Psoas muscle (tissue), 8 donors: ENCODE measurements at regions of chrX and their contacts with region 1.

Region 1: DNA sequence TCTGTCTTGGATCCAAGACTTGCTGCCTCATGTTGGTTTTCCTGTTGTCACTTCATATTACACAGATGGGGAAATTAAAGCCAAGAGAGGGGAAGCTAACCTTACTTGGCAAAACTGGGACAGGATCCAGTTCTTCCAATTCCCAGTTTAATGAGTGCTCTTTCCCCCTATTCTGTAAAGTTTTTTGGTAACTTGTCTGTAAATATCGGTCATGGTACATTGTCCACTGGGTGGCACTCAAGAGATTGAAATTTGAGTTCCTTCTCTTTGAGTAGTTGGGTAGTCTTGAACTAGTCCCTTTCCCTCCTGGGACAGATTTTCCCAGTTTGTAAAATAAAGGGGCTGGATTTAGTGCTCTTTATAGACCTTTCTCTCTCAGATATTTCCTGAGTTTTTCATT is 12.4 kb upstream of the EOLA2 start:
- DNase-seq: no peak
- ATAC-seq: peak in 3 of 4 donors; percentile 58 to 77 (median 60)
- H3K4me3 ChIP-seq: no peak overlapping the region
- H3K27ac ChIP-seq: peak overlapping the region; percentile 50
- H3K4me1 ChIP-seq: peaks cover 6% of the 10 kb centered on the region
- H3K27me3 ChIP-seq: no peaks in the 10 kb centered on the region
- CTCF ChIP-seq: peak; percentile 41

Region 2: GRCh38 chrX:150084496-150085229 is 134.0 kb after region 1 on chrX:
- intact Hi-C with region 1: no loop called
- DNase-seq: no peak
- ATAC-seq: no peak
- H3K4me3 ChIP-seq: no peak overlapping the region
- H3K27ac ChIP-seq: no peak overlapping the region
- H3K4me1 ChIP-seq: no peaks in the 10 kb centered on the region
- H3K27me3 ChIP-seq: no peaks in the 10 kb centered on the region
- CTCF ChIP-seq: no peak

Region 3: DNA sequence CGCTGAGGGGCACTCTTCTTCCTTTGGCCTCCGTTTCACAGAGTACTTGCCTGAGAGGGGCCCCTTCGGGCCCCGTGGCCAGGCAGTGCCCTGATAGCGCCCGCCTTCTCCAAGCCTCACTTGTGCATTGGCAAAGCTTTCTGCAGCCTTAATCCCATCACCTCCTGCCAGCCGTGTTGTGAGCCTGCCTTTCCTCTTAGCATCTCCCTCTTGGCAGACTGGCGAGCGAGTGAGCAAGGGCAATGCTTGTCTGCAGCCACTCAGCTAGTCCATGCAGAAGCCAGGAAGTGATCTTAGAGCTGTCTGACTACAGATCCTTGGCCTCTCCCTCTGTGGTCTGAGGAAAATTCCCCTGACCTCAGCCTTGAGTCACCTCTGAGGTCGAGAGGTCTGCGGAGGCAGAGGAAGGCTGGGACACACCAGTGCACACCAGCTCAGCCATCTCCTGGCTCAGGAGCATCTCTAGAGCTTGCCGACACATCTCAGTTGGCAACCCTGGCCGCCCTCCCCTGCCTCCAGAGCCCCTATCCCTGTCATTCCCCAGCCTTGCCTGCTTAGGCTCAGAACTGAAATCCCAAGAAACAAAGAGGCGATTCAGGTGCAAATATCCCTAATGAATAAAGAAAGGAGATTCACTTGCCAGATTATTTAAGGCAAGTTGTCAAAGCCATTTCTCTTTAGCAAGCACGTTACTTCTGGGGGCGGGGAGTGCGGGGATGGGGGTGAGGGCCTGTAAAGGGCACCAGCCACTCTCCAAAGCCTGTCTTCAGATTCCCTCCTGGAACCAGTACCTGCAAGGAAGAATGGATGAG is 268.9 kb after region 1 on chrX:
- intact Hi-C with region 1: loop called in 1 of 2 experiments (anchors 10 kb)
- DNase-seq: no peak
- ATAC-seq: peak; percentile 42 to 59 (median 49)
- H3K4me3 ChIP-seq: no peak overlapping the region
- H3K27ac ChIP-seq: no peak overlapping the region
- H3K4me1 ChIP-seq: no peaks in the 10 kb centered on the region
- H3K27me3 ChIP-seq: peaks cover 0 to 12% (median 0%) of the 10 kb centered on the region in 3 donors
- CTCF ChIP-seq: no peak

Region 4: DNA sequence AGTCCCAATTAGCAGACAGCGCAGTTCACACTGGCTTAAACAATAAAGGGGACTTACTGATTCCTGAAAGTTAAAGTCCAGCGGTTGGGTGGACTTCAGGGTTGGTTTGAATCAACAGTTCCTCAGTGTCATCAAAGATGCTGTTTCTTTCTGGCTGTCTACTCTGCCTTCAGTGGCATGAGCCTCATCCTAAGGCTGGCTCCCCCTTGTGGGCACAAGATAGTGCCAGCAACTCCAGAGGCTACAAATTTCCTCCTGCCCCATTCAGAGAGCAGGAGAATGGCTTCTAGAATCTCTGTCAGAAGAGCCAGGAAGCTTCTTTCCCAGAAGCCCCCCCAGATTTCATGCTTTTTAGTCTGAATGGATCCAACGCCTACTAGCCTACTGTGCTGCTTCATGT is 535.3 kb after region 1 on chrX:
- intact Hi-C with region 1: loop called in 1 of 2 experiments (anchors 10 kb)
- DNase-seq: peak; percentile 28 to 61
- ATAC-seq: peak; percentile 63 to 88 (median 78)
- H3K4me3 ChIP-seq: no peak overlapping the region
- H3K27ac ChIP-seq: no peak overlapping the region
- H3K4me1 ChIP-seq: no peaks in the 10 kb centered on the region
- H3K27me3 ChIP-seq: no peaks in the 10 kb centered on the region
- CTCF ChIP-seq: peak; percentile 62

Region 5: DNA sequence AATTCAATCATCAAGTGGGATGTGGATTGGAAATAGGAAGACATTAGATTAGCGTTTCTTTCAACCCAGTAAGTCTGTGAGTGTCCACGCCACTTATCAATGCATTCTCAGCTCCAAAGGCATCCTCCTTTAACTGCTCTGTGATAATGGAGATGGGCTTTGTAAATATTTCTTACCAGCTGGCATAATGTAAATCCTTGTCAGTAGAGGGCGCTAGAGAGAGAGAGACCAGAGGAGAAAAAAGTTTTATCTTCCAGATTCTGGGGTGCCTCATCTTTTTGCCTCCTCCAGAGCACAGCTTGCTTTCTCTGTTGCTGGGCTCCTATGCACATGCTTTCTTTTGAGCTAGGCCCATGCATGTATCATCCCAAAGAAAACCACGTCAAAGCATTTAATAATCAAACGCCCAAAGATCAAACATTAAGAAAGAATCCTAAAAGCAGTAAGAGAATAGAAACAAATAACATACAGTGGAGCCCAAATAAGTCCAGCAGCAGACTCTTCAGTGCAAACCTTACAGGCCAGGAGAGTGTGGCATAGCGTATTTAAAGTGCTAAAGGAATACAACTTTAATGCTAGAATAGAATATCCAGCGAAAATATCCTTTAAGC is 733.0 kb after region 1 on chrX:
- intact Hi-C with region 1: loop called in 1 of 2 experiments (anchors 10 kb)
- DNase-seq: no peak
- ATAC-seq: peak in 1 of 4 donors; percentile 33
- H3K4me3 ChIP-seq: no peak overlapping the region
- H3K27ac ChIP-seq: no peak overlapping the region
- H3K4me1 ChIP-seq: no peaks in the 10 kb centered on the region
- H3K27me3 ChIP-seq: no peaks in the 10 kb centered on the region
- CTCF ChIP-seq: peak; percentile 54